ENCODE measurements at regions of chr4 and their contacts with region 1.

Region 1: DNA sequence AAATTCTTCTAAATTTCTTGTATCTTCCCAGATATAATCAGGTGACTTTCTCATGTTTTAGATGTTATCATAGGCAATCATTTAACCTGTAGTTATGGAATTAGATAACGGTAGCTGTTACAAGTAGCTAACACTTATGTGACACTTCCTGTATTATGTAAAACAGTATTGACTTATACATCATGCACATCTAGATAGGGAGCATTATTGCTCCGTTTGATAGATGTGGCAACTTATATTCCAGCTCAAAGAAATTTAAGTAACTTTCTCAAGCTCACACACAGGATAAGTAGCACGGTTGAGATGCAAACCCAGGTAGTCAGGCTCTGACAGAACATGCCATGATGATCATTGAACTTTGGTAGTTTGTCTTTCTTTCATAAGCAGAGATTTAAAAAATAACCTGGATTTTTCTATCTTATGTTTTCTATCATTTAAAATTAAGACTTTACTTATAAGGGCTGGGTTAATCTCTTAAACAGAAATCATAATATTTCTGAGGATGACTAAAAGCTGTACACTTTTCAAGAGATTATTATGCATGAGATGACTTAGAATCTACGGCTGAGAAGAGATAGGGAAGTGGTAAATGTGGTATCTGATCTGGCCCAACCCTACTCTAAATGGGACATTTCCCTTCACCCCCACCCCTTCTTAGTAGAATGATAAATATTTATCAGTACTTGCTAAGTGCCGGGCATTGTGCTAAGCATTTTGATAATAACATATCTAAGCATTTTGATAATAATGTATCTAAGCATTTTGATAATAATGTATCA is 69.1 kb upstream of the HPGD start:
- DNase-seq: no peak
- H3K4me3 ChIP-seq: no peak overlapping the region
- H3K27ac ChIP-seq: no peak overlapping the region
- H3K4me1 ChIP-seq: no peaks in the 10 kb centered on the region
- H3K27me3 ChIP-seq: no peaks in the 10 kb centered on the region
- CTCF ChIP-seq: no peak

Region 2: DNA sequence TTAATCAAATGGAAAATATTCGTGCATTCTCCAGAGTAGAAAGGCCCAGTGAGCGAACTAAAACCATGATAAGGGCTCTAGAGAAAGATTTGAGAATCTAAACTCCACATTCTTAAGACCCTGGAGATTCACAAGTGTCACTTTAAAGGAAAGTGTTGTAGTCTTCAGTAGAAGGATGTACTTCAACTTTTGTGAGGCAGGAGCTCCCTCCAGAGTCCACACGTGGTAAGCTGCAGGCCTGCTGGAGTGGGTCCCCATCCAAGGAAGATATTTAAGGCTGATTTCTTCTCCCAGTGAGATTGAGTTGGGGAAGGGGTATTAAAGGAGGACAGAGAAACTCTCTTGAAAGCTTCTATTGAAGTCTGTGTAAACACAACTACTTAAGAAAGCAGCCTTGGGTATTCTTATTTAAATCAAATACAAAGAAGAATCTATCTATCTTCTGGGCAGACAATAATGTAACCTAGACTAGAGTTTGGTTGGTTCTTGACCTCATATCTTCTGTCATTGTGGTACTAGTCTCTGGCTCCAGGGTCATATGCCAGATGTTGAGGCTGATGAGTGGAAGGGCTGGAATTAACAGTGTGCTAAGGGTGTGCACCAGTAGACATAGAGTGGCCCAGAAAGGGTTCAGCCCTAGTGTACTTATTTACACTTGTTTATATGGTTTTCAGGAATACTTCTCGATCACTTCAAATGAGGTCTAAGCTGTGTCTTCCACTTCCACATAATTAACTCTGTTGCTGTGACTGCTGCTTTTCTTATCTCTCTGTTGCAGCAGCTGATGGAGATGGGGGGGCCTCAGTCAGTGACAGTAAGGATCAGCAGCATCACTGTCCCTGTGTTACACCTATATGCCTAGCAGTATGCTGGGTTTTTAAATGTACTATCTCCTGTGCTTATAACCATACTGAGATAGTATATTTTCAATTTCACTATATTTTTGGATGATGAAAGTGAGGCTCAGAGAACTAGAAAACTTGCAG is 1333.4 kb before region 1 on chr4:
- CTCF ChIA-PET with region 1: no interaction called
- dilution Hi-C with region 1: no loop called
- in situ Hi-C with region 1: no loop called
- intact Hi-C with region 1: no loop called
- DNase-seq: peak; percentile 38
- H3K4me3 ChIP-seq: no peak overlapping the region
- H3K27ac ChIP-seq: no peak overlapping the region
- H3K4me1 ChIP-seq: peaks cover 2% of the 10 kb centered on the region
- H3K27me3 ChIP-seq: no peaks in the 10 kb centered on the region
- CTCF ChIP-seq: peak; percentile 84 to 91

Region 3: DNA sequence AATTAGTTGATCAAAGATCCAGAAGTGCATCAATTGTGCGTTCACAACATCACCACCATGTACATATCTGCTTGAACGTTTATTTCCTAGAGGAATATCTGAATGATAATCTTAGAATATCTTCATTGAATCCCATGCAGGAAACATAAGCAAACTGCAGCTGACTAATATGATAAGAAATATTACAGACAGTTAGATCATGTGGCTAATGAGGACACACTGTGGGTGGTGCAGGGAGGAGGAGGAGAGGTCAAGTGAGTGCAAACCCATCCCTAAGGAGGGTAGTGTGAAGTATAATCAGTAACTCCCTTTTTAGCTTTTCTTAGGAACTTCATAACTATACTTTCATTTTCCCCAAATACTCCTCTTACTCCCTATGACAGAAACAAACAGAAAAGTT is 10.8 kb before region 1 on chr4:
- CTCF ChIA-PET with region 1: no interaction called
- dilution Hi-C with region 1: no loop called
- in situ Hi-C with region 1: no loop called
- intact Hi-C with region 1: loop called (anchors 1 kb)
- DNase-seq: no peak
- H3K4me3 ChIP-seq: no peak overlapping the region
- H3K27ac ChIP-seq: no peak overlapping the region
- H3K4me1 ChIP-seq: no peaks in the 10 kb centered on the region
- H3K27me3 ChIP-seq: no peaks in the 10 kb centered on the region
- CTCF ChIP-seq: no peak

Region 4: GRCh38 chr4:174613979-174614378 is 22.5 kb after region 1 on chr4:
- CTCF ChIA-PET with region 1: no interaction called
- dilution Hi-C with region 1: no loop called
- in situ Hi-C with region 1: no loop called
- intact Hi-C with region 1: no loop called
- DNase-seq: no peak
- H3K4me3 ChIP-seq: no peak overlapping the region
- H3K27ac ChIP-seq: no peak overlapping the region
- H3K4me1 ChIP-seq: no peaks in the 10 kb centered on the region
- H3K27me3 ChIP-seq: no peaks in the 10 kb centered on the region
- CTCF ChIP-seq: no peak